Dendritic cell treated with granulocyte-macrophage colony-stimulating factor and Interleukin-4, amounts not matched to agents 40 ng/mL and 50 ng/mL, for 4 days (primary cell): ENCODE measurements at regions of chr3 and their contacts with region 1.

Region 1: DNA sequence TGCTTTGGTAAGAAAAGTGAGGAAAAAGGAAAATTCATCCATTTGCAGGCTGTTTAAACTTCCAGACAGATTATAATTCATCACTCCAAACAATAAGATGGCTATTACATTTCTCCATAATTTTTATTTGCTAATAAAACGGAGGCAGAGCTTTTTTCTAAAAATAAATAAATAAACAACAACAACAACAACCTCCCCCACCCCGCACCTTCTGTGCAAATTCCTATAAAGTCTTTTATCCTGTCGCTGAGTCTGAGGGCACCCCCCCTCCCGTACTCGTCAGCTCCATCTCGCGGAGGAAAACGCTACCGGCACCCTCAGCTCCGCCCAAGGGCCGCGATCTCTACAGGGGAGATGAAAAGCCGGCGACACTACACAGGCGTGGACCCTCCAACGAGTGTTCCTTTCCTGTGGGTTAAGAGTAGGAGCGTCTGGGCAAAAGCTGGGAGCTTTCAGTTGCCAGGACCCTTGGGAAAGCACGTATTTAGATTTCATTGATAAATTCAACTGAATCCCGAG is 1.0 kb upstream of the ATP1B3 start:
- H3K4me3 Mint-ChIP-seq: peak overlapping the region; percentile 86
- H3K27ac Mint-ChIP-seq: peak overlapping the region; percentile 99
- H3K4me1 Mint-ChIP-seq: peaks cover 16% of the 10 kb centered on the region
- H3K27me3 Mint-ChIP-seq: no peaks in the 10 kb centered on the region

Region 2: DNA sequence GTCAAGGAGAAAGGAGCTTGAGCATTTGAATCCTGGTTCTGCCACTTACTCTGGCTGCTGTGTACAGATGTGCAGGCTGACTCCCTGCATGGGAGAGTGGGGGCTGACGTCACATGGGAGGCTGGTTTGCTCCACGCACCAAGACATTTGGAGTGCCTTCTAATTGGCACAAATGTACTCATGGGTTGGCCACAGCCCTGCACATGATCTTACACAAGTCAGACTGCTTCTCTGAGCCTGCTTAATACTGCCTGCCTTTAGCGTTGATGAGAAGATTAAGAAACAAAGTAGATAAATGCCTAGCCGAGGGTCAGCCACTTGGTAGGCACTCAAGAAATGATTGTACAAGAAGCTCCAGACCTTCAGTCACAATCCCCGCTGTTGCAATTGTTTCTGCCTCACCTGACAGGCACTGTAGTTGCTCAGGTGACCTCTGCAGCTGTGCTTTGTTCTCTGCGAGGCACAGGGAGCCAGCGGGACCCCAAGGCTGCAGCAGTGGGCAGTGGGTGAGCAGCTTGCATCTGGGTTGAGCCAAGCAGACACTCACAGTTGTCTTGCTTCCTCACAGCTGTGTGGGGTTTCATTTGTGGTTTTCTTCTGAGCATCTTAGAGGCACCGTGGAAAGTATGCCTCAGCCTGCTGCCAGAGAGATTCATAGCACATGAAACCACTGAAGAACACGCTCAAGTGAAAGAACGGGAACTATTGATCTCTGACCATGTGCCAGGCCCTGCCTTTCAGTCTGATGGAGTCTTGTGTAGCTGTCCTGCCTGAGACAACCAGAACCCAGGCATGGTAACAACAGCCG is 79.1 kb before region 1 on chr3:
- intact Hi-C with region 1: loop called (anchors 2 kb)
- H3K4me3 Mint-ChIP-seq: no peak overlapping the region
- H3K27ac Mint-ChIP-seq: peak overlapping the region; percentile 95
- H3K4me1 Mint-ChIP-seq: peaks cover 35% of the 10 kb centered on the region
- H3K27me3 Mint-ChIP-seq: peaks cover 2% of the 10 kb centered on the region

Region 3: DNA sequence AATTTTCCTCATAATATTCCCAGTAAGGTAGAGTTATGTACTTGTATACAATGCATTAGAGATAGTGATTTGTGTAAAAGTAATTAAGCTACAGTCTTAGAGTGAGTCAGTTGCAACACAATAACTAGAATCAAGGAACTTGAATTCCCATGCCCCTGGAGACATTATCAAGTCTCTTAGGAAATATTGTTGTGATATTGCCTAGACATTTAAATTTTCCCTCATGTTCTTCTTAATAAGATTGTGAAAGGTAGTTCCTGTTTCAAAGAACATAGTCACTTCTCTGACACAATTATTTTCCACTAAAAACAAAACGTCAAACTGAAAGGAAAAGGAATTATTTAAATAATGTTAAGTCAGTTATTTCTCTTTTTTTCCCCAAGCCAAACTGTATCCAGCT is 11.9 kb before region 1 on chr3:
- intact Hi-C with region 1: loop called (anchors 1 kb)
- H3K4me3 Mint-ChIP-seq: peak overlapping the region; percentile 46
- H3K27ac Mint-ChIP-seq: peak overlapping the region; percentile 92
- H3K4me1 Mint-ChIP-seq: peaks cover 38% of the 10 kb centered on the region
- H3K27me3 Mint-ChIP-seq: no peaks in the 10 kb centered on the region

Region 4: GRCh38 chr3:141913150-141913811 is 37.8 kb after region 1 on chr3:
- intact Hi-C with region 1: loop called (anchors 5 kb)
- H3K4me3 Mint-ChIP-seq: no peak overlapping the region
- H3K27ac Mint-ChIP-seq: no peak overlapping the region
- H3K4me1 Mint-ChIP-seq: no peaks in the 10 kb centered on the region
- H3K27me3 Mint-ChIP-seq: no peaks in the 10 kb centered on the region

Region 5: GRCh38 chr3:142447852-142448823 is 572.7 kb after region 1 on chr3 and contains the start of gene XRN1:
- intact Hi-C with region 1: loop called (anchors 5 kb)
- H3K4me3 Mint-ChIP-seq: peak within 1 kb of the TSS; percentile 97
- H3K27ac Mint-ChIP-seq: peak within 1 kb of the TSS; percentile 99
- H3K4me1 Mint-ChIP-seq: peaks cover 31% of the 10 kb centered on the region
- H3K27me3 Mint-ChIP-seq: no peaks in the 10 kb centered on the region